SK-N-SH (cell line): ENCODE measurements at regions of chr1 and their contacts with region 1.

Region 1: GRCh38 chr1:175742790-175743459 is 470 bp downstream of the TNR start:
- DNase-seq: peak; percentile 43
- H3K4me3 ChIP-seq: peak overlapping the region in 1 of 2 experiments; percentile 43; a peak in 2 of 4 replicates
- H3K27ac ChIP-seq: peak overlapping the region in 1 of 2 experiments; percentile 51; a peak in 1 of 4 replicates
- H3K4me1 ChIP-seq: peaks cover 0 to 5% of the 10 kb centered on the region in 2 experiments; a peak in 1 of 4 replicates
- H3K27me3 ChIP-seq: no peaks in the 10 kb centered on the region
- CTCF ChIP-seq: no peak
- EP300 ChIP-seq: no peak
- RAD21 ChIP-seq: no peak; the same call in 1 of the 2 replicates

Region 2: DNA sequence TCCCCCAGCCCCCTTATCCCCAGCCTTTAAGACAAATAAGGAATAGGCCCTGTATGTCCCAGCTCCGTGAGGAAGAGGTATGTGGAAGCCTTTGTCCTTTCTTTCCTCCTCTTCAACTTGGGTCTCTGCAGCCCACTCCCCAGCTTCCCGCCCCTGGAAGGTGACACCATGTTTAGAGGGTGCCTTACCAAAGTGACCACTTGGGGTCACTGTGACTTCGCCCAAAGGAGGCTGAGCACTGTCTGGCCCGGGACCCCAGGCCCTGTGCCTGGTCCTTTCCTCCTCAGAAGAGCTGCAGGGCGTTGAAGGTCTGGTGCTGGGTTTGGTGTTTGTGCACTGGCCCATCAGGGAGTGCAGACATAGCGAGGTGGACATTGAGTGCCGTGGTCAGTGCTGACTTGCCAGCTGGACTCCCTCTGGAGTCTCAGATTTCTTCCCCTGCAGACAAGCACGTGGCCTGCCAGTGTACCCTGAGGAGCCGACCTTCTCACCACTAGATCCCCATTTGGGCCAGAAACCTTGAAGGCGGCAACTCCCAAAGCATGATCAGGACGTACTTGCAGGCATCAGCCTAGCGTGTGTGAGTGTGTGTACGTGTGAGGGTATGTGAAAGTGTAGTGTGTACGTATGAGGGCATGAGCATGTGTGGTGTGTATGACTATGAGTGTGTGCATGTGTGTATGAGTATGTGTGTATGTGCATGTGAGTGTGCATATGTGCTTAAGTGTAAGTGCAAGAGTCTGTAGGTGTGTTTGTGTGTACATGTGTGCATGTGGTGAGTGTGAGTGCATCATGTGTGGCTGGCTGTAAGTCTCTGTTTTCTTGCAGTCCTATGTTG is 368.9 kb before region 1 on chr1:
- CTCF ChIA-PET with region 1: interaction called, 166 read pairs
- POLR2A ChIA-PET with region 1: interaction called, 3 read pairs
- DNase-seq: peak; percentile 77
- H3K4me3 ChIP-seq: peak overlapping the region in 1 of 2 experiments; percentile 29; a peak in 1 of 4 replicates
- H3K27ac ChIP-seq: no peak overlapping the region; a peak in 1 of 4 replicates
- H3K4me1 ChIP-seq: peaks cover 0 to 30% of the 10 kb centered on the region in 2 experiments; a peak in 2 of 4 replicates
- H3K27me3 ChIP-seq: no peaks in the 10 kb centered on the region
- CTCF ChIP-seq: peak; percentile 42
- EP300 ChIP-seq: no peak
- RAD21 ChIP-seq: peak; percentile 90

Region 3: DNA sequence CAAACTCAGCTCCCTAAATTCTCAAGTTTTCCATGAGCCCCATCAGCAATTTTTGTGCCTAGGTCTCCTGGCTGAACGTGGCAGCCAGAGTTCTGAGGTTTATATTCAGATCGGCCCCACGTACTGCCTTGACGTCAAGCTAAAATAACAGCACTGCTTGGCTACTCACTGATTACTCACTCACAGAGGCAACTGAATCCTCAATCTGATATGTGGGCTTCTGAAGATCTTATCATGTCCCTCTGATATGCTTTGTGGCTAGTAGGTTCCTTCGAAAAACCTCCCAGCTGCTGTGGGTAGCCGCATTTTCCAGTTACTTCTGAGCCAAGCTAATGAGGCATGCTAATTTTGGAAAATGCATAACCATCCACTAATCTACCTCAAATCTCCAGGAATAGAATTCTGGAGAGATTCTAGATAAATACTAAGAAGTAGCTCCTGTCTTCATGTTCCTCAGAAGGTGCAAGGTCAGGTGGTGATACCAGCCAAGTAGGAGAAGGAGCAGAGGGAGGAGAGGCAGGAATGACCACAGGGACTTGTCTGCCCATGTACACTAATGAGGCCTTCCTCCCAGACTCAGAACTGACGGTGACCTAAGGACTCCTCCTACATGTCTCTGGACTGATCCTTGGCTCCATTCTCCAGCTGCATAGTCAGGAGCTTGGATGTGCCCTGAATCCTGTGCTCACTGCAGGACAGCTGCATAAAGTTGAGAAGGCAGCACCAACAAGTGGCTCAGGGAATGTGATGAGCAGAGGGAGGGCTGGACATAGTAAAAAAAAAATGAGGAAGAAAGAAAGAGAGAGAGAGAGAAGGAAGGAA is 263.2 kb before region 1 on chr1:
- CTCF ChIA-PET with region 1: interaction called, 20 read pairs
- POLR2A ChIA-PET with region 1: no interaction called
- DNase-seq: no peak
- H3K4me3 ChIP-seq: no peak overlapping the region
- H3K27ac ChIP-seq: no peak overlapping the region; a peak in 1 of 4 replicates
- H3K4me1 ChIP-seq: peaks cover 0 to 16% of the 10 kb centered on the region in 2 experiments; a peak in 2 of 4 replicates
- H3K27me3 ChIP-seq: no peaks in the 10 kb centered on the region
- CTCF ChIP-seq: no peak
- EP300 ChIP-seq: no peak
- RAD21 ChIP-seq: no peak

Region 4: GRCh38 chr1:175572932-175573862 is 169.7 kb before region 1 on chr1:
- CTCF ChIA-PET with region 1: interaction called, 21 read pairs
- POLR2A ChIA-PET with region 1: interaction called, 7 read pairs
- DNase-seq: peak; percentile 81
- H3K4me3 ChIP-seq: no peak overlapping the region
- H3K27ac ChIP-seq: peak overlapping the region in 1 of 2 experiments; percentile 90; a peak in 2 of 4 replicates
- H3K4me1 ChIP-seq: peaks cover 0 to 24% of the 10 kb centered on the region in 2 experiments; a peak in 2 of 4 replicates
- H3K27me3 ChIP-seq: no peaks in the 10 kb centered on the region
- CTCF ChIP-seq: no peak
- EP300 ChIP-seq: peak in 1 of 2 experiments; percentile 97; a peak in 2 of 4 replicates
- RAD21 ChIP-seq: peak; percentile 42

Region 5: DNA sequence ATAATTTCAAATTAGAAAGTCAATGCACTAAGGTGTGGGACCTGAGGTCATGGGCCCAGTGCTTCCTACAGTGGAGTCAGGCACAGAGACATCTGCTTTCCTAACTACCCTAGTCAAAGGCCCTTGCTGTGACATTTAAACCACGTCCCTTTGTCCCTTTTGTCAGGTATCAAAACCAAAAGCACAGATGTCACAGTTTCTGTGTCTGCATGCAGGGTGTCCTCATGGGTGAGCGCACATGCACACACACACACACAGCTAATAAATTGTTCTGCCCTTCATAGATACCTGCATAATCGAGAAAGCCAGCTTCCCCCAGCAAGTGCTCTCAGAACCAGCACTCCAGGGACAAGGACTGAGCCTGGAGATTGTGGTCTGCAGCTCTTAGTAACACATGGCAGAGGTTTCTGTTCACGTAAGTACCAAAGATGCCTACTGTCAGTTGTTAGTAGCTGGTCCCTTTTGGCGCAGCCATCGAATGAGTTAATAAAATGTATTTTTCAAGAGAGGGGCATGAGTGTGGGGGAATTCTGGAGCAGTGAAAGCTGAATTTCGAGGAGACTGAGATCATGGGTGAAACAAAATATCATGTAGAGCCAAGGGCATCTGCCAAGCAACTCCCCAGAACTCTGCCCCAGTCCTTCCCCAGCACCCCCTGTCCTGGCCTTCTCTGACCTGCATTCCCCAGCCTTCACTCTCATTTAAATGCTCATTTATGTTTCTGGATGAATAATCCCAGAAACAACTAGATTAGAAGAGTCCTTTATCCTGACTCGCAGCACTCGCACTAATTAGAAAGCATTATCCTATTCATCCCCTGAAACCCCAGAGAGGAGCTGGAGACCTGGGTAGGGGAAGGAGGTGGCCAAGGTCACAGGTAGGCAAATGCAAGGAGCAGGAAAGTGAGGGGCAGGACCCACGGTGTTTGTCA is 25.1 kb before region 1 on chr1:
- CTCF ChIA-PET with region 1: interaction called, 34 read pairs
- POLR2A ChIA-PET with region 1: interaction called, 3 read pairs
- DNase-seq: no peak
- H3K4me3 ChIP-seq: no peak overlapping the region
- H3K27ac ChIP-seq: no peak overlapping the region
- H3K4me1 ChIP-seq: peaks cover 0 to 57% of the 10 kb centered on the region in 2 experiments; a peak in 2 of 4 replicates
- H3K27me3 ChIP-seq: no peaks in the 10 kb centered on the region
- CTCF ChIP-seq: no peak
- EP300 ChIP-seq: no peak
- RAD21 ChIP-seq: no peak

Region 6: DNA sequence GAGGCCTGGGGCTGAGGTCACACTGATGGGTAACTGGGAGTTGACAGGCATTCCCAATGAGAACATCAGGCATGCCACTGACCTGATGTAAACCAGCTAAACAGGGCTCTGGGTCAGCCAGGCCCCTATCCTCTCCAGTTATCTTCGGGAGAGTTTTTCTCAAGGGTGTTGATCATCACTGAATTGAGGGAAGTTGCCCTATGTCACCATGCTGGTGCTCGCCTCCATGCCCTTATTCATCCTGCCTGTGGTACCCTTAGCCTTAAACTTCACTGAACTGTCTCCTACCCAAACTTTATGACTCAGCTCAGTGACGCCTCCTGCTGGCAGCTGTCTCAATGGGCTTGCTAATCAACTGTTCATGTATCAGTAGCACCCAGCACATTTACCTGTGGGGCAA is 81.2 kb after region 1 on chr1:
- CTCF ChIA-PET with region 1: no interaction called
- POLR2A ChIA-PET with region 1: no interaction called
- DNase-seq: no peak
- H3K4me3 ChIP-seq: peak overlapping the region in 1 of 2 experiments; percentile 32; a peak in 1 of 4 replicates
- H3K27ac ChIP-seq: no peak overlapping the region
- H3K4me1 ChIP-seq: no peaks in the 10 kb centered on the region
- H3K27me3 ChIP-seq: no peaks in the 10 kb centered on the region
- CTCF ChIP-seq: 0 out of 2 replicates have a peak, but pooled peaks have one; percentile 19
- EP300 ChIP-seq: no peak
- RAD21 ChIP-seq: no peak

Region 7: DNA sequence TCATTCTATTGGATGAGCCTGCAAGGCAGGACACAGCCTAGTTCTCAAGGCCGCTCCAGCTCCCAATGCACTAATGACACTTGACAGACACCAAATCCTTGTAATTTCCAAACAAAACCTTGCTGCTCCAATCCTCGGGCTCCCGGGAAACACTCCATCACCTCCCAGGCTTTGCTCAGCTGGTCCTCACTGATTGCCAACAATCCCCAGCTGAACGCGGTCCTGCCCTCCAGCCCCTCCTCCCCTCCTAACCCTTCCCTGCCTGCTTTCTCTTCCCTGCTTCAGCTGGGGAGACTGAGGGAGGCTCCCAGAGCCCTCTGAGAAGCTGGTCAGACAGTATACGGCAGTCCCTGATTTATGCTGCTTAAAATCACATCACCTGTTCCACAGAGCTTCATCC is 114.8 kb after region 1 on chr1:
- CTCF ChIA-PET with region 1: interaction called, 11 read pairs
- POLR2A ChIA-PET with region 1: no interaction called
- DNase-seq: no peak
- H3K4me3 ChIP-seq: no peak overlapping the region
- H3K27ac ChIP-seq: no peak overlapping the region
- H3K4me1 ChIP-seq: no peaks in the 10 kb centered on the region; a peak in 1 of 4 replicates
- H3K27me3 ChIP-seq: no peaks in the 10 kb centered on the region; the same call in 1 of the 2 replicates
- CTCF ChIP-seq: no peak
- EP300 ChIP-seq: no peak
- RAD21 ChIP-seq: no peak

Region 8: DNA sequence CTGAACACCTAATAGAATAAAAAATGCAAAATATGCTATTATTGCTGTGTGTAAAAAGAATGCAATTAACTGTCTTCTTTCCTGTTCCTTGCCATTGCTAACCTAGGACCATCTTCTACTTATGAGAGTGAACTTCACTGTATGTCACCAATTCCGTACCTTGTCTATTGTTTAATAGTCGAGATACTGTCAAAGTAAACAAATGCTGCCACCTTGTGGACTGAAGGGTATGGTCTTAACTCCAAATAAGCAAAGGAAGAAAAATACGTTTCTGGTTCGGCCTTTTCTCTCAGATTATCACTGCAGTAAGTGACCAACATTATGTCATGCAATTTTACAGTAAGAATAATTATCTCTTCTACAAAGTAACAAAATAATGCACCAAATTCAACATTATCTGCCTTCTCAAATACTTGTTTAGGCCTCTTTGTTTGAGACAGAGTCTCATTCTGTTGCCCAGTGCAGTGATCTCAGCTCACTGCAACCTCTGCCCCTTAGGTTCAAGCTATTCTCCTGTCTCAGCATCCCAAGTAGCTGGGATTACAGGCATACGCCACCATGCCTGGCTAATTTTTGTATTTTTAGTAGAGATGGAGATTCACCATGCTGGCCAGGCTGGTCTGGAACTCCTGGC is 330.7 kb after region 1 on chr1:
- CTCF ChIA-PET with region 1: interaction called, 13 read pairs
- POLR2A ChIA-PET with region 1: no interaction called
- DNase-seq: peak; percentile 57
- H3K4me3 ChIP-seq: no peak overlapping the region; a peak in 1 of 4 replicates
- H3K27ac ChIP-seq: no peak overlapping the region
- H3K4me1 ChIP-seq: no peaks in the 10 kb centered on the region; a peak in 1 of 4 replicates
- H3K27me3 ChIP-seq: no peaks in the 10 kb centered on the region
- CTCF ChIP-seq: peak; percentile 84
- EP300 ChIP-seq: no peak
- RAD21 ChIP-seq: peak; percentile 98